PC-9 (cell line): ENCODE measurements at regions of chr3 and their contacts with region 1.

Region 1: DNA sequence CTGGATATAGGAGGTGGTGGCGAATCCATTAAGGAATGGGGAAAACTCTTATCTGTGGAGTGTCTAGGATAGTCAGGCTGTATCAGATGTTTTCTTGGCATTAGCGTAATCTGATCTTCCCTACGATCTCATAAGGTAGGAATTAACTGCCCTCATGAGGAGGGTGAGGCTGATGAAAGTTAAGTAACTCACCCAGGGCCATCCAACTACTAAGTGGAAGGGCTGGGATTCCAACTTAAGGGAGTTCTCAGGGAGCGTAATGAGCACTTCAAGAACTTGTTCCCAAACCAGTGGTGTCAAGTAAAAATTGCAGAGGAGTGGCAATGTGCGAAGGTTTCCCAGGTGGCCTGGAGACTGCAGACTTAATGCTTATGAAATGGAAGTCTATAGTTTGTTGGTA is 55.9 kb upstream of the OSBPL11 start:
- DNase-seq: peak in 1 of 2 experiments; percentile 66
- H3K4me3 ChIP-seq: no peak overlapping the region
- H3K27ac ChIP-seq: peak overlapping the region; percentile 52
- H3K4me1 ChIP-seq: peaks cover 42% of the 10 kb centered on the region
- H3K27me3 ChIP-seq: no peaks in the 10 kb centered on the region
- CTCF ChIP-seq: no peak

Region 2: DNA sequence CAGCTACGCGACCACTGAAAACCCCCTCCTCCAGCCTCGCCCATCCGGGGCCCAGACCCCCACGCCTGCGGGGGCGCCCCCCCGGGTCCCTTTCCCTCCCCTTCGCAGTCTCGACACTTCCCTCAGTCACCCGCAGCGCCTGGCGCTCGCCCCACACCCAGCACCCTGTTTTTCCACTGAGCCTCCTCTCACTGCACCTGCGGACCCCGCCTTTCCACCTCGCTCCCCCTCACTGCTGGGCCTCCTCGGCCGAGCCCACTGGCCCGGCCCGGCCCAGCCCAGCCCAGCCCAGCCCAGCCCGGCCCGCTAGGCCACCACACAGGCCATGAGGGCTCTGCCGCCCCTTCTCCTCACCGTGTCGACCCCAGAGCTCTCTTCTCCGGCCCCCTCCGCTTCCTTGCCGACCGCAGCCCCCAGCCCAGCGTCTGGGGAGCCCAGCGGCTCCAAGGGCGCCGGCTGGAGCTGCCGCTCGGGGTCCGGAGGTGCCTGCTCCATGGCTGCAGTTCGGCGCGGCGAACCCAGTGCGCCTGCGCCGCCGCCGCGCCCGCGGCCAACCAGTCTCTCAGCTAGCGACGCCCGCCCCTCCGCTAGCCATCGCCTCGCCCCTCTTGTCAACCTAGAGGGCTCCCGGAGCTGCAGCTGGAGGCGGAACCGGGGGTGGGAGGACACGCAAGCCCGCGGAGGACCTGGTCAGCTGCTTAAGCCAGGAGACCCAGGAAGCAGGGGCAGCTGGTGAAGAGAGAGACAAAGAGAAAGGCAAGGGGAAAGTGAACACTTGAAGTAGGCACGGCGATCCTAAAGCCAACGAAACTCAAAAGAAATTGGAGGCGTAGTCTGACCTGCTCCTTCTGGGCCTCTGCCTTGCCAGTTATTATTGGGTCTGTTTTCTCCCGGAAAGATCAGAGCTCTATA is 131.3 kb before region 1 on chr3 and contains the start of gene SNX4:
- CTCF ChIA-PET with region 1: no interaction called
- POLR2A ChIA-PET with region 1: no interaction called
- intact Hi-C with region 1: no loop called
- DNase-seq: peak; percentile 84 to 94
- H3K4me3 ChIP-seq: peak within 1 kb of the TSS; percentile 91
- H3K27ac ChIP-seq: no peak within 1 kb of the TSS
- H3K4me1 ChIP-seq: no peaks in the 10 kb centered on the region; the same call in 1 of the 2 replicates
- H3K27me3 ChIP-seq: no peaks in the 10 kb centered on the region
- CTCF ChIP-seq: no peak
- total RNA-seq, gene SNX4: 28.6 and 31.6 TPM in 2 replicates

Region 3: DNA sequence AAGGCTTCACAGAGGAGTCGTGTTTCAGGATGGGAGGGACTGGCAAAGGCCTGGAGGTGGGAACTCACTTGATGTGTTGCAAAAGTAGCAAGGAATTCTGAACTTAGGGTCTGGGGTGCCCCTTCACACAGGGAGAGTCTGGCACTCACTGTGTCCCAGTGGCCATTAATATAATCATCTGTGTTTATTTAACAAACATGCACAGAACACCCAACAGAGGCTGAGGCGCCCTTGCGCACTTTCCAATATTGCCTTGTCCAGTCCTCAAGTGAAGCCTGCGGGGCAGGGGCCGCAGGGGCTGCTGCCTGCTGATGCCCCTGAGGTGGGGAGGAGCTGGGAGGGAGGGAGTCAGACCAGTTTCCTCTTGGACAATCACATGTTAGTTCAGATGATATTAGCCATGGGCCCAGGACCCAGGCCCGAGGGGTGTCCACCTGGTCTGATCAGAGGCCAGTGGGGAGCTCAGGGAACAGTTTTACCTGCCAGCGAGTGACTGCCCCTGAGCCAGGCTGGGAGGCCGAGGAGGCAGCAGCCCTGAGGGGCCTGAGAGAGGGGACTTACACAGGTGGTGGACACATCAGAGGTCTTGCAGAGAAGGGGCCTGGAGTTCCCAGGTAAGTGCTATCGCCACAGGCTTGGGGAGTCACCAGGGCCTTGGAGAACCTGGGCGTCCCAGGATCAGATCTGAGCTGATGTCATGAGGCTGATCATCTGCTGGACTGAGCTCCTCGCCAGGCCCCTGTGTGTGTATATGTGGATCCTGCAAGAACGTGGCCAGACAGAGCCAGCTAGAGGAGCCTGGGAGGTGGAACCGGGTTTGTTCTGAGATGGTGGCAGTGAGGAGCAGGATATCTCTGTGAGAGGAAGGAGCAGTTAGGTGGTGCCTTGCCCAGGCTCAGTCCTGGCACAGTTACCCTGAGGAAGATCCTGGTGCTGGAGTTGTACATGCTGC is 1017.5 kb after region 1 on chr3:
- CTCF ChIA-PET with region 1: interaction called, 13 read pairs
- POLR2A ChIA-PET with region 1: no interaction called
- intact Hi-C with region 1: no loop called
- DNase-seq: no peak
- H3K4me3 ChIP-seq: no peak overlapping the region
- H3K27ac ChIP-seq: no peak overlapping the region
- H3K4me1 ChIP-seq: no peaks in the 10 kb centered on the region
- H3K27me3 ChIP-seq: peaks cover 17% of the 10 kb centered on the region
- CTCF ChIP-seq: no peak

Region 4: GRCh38 chr3:127448161-127448561 is 1796.9 kb after region 1 on chr3:
- CTCF ChIA-PET with region 1: no interaction called
- POLR2A ChIA-PET with region 1: no interaction called
- intact Hi-C with region 1: no loop called
- DNase-seq: no peak
- H3K4me3 ChIP-seq: no peak overlapping the region
- H3K27ac ChIP-seq: no peak overlapping the region
- H3K4me1 ChIP-seq: no peaks in the 10 kb centered on the region
- H3K27me3 ChIP-seq: peaks cover 29% of the 10 kb centered on the region
- CTCF ChIP-seq: no peak